ENCODE measurements at regions of chr12 and their contacts with region 1.

Region 1: DNA sequence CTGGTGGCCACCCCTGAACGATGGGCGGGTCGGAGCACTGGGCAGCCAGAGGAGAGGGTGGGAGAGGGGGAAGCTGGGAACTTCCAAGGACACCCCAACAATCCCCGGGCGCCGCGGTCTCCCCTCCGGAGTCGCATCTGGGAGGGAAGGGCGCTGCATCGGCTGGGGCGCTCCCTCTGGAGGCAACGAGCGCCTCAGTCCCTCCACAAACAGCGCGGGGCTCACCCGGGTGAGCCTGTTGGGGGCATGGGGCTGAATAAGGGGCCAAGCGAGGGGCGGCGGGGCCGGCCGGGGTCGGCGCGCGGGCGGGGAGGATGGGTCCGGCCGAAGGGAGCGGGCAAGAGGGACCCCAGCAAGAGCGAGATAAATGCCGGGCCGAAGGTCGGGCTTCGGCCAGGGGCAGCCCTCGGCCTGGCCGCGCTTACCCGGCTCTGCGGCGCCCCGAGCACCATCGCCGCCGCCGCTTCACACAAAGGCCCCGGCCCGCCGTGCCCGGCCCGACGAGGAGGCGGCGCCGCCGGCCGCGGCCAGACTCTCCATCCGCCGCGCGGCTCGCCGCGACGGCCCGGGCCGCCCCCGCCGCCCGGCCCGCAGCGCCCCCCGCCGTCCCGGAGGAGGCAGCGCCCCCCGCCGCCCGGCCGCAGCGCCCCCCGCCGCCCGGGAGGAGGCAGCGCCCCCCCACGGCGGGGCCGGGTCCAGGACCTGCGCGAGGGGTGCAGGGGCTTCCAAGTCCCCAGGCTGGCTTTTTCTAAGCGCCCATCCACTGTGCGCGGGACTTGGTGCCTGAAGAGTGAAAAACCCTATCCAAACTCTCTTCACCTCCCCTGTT is at the start of gene ZBTB39:
- DNase-seq: peak; percentile 70
- ATAC-seq: peak; percentile 82
- H3K4me3 Mint-ChIP-seq: peak within 1 kb of the TSS; percentile 81
- H3K27ac Mint-ChIP-seq: peak within 1 kb of the TSS; percentile 82
- H3K4me1 Mint-ChIP-seq: peaks cover 34% of the 10 kb centered on the region
- H3K27me3 Mint-ChIP-seq: no peaks in the 10 kb centered on the region
- total RNA-seq, gene ZBTB39: 8.8 to 9.3 TPM

Region 2: DNA sequence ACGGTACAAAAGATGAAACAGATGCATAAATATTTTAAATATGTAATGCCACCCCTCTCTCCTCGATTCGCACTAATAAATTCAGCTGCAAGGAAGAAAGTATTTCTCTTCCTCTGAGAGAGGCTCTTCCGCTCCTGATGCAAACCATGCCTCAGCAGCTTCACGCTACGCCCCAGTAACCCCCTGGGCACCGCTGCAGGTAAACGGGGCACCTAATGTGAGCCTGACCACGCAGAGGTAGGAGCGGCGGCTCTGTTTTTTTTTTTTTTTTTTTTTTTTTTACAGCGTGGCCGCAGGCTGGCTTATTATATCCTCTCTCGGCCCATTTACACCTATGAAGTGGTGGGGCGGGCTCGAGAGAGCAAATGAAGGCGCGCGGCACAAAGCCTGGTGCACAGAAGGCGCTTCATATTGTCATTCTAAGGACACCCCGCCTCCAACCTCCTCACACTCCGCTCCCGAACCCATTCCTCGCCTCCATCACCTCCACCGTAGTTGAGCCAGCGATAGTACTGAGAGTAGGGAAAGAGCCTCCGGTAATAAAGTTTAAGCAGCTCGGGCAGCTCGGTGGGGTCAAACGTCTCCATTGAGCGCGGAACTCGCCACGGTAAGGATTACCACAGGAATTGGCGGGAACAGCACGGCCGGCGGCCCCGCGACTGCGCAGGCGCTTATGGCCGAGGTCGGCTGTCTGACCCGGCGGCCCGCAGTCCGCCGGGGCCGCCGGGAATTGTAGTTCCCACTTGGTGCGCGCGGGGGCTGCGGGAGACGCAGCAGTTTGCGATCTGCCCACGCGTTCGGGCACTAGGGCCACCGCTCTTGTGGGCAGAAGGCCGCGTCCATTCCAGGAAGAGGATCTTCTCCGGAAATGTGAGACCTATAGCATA is 254.2 kb before region 1 on chr12 and contains the start of gene PRIM1:
- CTCF ChIA-PET with region 1: interaction called, 107 read pairs
- DNase-seq: peak; percentile 94
- ATAC-seq: peak; percentile 93
- H3K4me3 Mint-ChIP-seq: peak within 1 kb of the TSS; percentile 92
- H3K27ac Mint-ChIP-seq: peak within 1 kb of the TSS; percentile 98
- H3K4me1 Mint-ChIP-seq: peaks cover 44% of the 10 kb centered on the region
- H3K27me3 Mint-ChIP-seq: no peaks in the 10 kb centered on the region
- total RNA-seq, gene PRIM1: 62.9 to 65.3 TPM

Region 3: GRCh38 chr12:56908136-56908535 is 98.1 kb before region 1 on chr12:
- CTCF ChIA-PET with region 1: no interaction called
- DNase-seq: no peak
- ATAC-seq: no peak
- H3K4me3 Mint-ChIP-seq: no peak overlapping the region
- H3K27ac Mint-ChIP-seq: no peak overlapping the region
- H3K4me1 Mint-ChIP-seq: no peaks in the 10 kb centered on the region
- H3K27me3 Mint-ChIP-seq: peaks cover 15% of the 10 kb centered on the region

Region 4: GRCh38 chr12:56987551-56988053 is 18.6 kb before region 1 on chr12:
- CTCF ChIA-PET with region 1: interaction called, 55 read pairs
- DNase-seq: peak; percentile 80
- ATAC-seq: peak; percentile 78
- H3K4me3 Mint-ChIP-seq: no peak overlapping the region
- H3K27ac Mint-ChIP-seq: no peak overlapping the region
- H3K4me1 Mint-ChIP-seq: peaks cover 20% of the 10 kb centered on the region
- H3K27me3 Mint-ChIP-seq: peaks cover 10% of the 10 kb centered on the region

Region 5: DNA sequence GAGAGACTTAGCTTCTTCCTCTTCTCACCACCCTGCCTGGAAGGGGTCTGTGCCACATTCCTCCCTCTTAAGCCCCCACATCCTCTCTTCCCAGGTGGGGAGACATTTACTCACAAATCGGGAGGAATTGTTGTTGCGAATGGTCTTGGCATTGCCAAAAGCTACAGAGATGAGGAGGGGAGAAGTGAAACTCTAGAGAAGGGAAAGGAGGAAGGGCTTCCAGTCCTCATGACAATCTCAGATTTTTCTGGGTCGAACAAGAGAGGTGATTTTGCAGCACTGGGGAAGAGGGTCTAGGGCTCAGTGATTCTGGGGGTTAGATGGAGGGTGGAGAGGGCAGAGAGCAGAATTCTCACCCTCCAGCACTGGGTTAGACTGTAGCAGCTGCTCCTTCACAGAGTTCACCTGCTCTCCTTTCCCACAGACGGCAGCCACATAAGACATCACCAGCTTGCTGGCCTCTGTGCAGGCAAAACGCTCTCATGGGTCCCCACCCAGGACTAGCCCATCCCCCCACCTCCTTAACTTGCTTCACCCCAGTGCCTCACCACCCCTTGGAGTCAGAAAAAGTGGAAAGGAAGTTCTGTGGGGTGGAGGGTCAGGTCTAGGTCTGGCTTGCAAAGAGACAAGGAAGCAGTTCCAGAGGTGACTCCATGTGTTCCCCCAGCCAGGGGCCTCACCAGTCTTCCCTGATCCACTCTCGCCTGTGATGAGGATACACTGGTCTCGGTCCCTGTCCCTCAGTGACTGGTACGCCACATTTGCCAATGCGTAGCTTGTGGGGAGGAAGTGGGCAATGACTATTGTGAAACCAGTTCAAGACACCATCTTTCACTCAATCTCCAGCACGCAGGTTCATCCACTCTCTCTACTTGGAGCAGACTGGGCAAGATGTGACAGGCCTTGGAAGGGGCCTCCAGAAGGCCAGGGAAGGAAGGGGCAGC is 41.0 kb after region 1 on chr12:
- CTCF ChIA-PET with region 1: interaction called, 19 read pairs
- DNase-seq: peak; percentile 89
- ATAC-seq: peak; percentile 85
- H3K4me3 Mint-ChIP-seq: peak overlapping the region; percentile 24
- H3K27ac Mint-ChIP-seq: peak overlapping the region; percentile 74
- H3K4me1 Mint-ChIP-seq: peaks cover 37% of the 10 kb centered on the region
- H3K27me3 Mint-ChIP-seq: peaks cover 22% of the 10 kb centered on the region

Region 6: DNA sequence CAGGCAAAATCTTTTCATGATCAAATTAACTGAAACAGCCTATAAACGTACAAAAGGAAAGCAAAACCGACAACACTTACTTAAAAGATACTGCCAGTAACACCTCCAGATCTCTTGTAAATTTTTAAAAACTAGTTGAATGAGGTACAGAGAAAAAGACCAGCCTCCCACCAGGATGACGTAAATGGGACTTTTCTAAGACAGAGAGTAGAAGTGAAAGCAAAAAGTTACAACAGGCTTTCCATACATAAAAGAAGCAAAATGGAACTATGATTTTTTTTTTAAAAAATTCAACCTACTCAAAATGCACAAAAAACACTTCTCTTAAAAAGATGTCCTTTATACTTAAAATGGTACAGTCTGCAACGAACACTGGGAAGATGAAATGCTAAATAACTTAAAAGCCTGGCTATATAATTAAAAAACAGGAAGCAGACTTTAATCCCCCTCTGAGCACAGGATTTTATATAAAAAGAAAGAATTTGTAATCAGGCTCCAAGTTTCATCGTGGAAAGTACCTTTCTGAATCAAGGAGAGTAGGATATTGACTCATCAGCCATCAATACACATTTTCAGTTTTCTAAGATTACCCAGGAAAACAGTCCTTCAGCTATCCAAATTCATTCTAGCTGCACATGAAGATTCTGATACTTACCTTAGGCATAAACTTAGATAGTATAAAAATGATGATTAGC is 57.9 kb after region 1 on chr12:
- CTCF ChIA-PET with region 1: interaction called, 88 read pairs
- DNase-seq: peak; percentile 70
- ATAC-seq: peak; percentile 91
- H3K4me3 Mint-ChIP-seq: peak overlapping the region; percentile 71
- H3K27ac Mint-ChIP-seq: peak overlapping the region; percentile 95
- H3K4me1 Mint-ChIP-seq: peaks cover 34% of the 10 kb centered on the region
- H3K27me3 Mint-ChIP-seq: no peaks in the 10 kb centered on the region

Region 7: DNA sequence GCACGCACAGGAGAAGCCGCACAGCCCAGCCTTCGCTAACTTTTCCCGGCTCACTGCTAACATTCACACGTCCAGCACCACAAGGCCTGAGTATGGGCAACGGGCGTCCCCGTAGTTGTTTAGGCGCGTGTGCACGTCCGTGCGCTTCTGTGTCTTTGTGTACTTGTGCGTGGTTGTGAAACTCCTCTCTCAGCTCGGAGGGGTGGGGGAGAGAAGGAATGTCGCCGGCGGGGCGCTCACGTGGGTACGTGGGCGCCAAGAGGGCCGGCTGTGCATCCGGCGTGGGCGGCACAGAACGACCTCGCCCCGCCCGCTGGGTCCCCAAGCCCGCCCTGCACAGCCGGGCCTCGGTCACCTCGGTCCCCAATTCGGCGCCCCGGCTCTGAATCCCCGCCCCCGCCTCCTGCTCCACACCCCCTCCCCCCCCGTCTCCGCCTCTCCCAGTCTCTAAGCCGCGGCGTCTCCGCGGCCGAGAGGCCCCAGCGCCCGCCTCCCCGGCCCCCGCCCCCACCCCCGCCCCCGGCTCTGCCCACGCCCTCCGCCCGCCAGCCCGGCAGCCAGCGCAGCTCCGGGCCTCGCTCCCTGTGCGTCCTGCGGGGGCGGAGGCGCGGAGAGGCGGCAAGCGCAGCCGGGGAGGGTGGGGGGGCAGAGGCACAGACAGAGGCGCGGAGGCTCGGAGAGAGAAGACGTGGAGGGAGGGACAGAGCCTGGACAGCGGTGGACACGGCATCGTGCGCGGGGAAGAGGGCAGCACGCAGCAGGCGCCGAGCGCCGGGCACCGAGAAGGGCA is 82.5 kb after region 1 on chr12 and contains the start of gene NAB2:
- CTCF ChIA-PET with region 1: interaction called, 18 read pairs
- DNase-seq: peak; percentile 97
- ATAC-seq: peak; percentile 80
- H3K4me3 Mint-ChIP-seq: peak within 1 kb of the TSS; percentile 84
- H3K27ac Mint-ChIP-seq: peak within 1 kb of the TSS; percentile 88
- H3K4me1 Mint-ChIP-seq: peaks cover 58% of the 10 kb centered on the region
- H3K27me3 Mint-ChIP-seq: no peaks in the 10 kb centered on the region
- total RNA-seq, gene NAB2: 10.0 to 31.1 TPM

Region 8: DNA sequence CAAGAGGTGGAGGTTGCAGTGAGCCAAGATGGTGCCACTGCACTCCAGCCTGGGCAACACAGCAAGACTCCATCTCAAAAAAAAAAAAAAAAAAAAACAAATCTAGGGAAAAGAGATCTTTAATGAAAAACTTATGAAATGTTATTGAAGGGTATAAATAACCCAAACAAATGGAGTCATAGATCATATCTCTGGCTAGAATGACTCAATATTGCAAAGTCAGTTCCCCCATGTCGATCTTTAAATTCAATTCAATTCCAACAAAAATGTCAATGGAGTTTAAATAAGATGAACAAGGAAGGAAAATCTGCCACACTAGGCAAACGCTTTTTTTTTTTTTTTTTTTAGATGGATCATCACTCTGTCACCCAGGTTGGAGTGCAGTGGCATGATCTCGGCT is 346.0 kb after region 1 on chr12:
- CTCF ChIA-PET with region 1: no interaction called
- DNase-seq: no peak
- ATAC-seq: no peak
- H3K4me3 Mint-ChIP-seq: no peak overlapping the region
- H3K27ac Mint-ChIP-seq: no peak overlapping the region
- H3K4me1 Mint-ChIP-seq: no peaks in the 10 kb centered on the region
- H3K27me3 Mint-ChIP-seq: no peaks in the 10 kb centered on the region